Dorsolateral prefrontal cortex (tissue), 120 donors: ENCODE measurements at regions of chr11 and their contacts with region 1.

Region 1: DNA sequence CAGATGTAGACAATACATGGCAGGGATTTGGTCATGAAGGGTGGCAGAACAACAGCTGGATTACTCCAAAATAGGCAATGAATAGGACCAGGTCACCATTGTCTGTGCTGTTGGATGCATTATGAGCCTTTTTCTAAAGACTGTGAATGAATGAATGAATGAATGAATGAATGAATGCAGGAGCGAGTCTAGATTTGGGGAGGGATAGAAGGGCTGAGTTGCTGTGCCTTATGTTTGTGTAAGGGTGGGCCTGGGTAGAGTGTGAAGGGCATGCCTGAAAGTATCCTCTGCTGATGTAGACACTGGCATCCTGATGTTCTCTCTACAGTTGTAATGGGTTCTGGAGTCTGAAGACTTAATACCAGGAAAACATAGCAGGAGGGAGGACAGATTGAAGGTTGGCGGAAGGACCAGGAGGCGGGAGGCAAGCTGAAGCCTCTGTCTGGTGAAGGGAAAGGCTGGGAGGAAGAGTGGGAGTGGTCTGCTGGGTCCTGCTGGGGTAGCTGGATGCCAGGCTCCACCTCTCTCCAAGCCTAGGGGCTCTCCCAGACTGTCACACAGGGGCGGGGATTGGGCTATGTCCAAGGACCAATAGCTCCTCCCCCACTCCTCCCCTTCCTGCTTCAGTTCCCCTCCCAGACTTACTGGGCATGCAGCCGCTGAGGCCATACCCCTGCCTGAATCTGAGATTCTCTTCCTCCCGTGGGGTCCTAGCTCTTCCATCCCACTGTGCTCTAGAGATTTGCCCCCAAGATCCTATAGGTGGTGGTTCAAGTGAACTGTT is 4.8 kb downstream of the TRIM3 start:
- DNase-seq: peak; percentile 31 to 91 (median 83)
- H3K4me3 ChIP-seq: peak overlapping the region in 17 of 59 donors; percentile 7 to 35 (median 21)
- H3K27ac ChIP-seq: peak overlapping the region in 55 of 59 donors; percentile 36 to 93 (median 78)
- H3K27me3 ChIP-seq: no peaks in the 10 kb centered on the region
- CTCF ChIP-seq: peak in 4 of 56 donors; percentile 14 to 27 (median 21)

Region 2: DNA sequence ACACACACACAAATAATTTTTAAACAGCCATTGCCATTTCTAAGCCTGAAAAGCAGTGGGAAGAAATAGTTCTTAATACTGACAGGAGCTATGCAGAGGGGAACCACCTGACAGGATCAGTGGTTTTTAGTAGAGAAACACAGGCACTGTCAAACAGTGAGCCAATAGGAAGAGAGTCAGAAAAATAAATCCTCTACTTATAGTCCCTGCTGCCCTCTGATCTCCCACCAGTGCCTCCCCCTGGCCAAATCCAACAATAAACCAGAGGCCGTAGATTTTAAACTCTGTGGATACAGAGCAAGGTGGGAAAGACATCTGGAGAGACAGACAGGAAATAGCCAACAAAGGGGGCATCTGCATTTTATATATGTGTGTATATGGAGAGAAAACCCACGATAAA is 369.3 kb before region 1 on chr11:
- intact Hi-C with region 1: no loop called
- DNase-seq: no peak
- H3K4me3 ChIP-seq: no peak overlapping the region
- H3K27ac ChIP-seq: no peak overlapping the region
- H3K27me3 ChIP-seq: peaks cover 0 to 9% (median 0%) of the 10 kb centered on the region in 45 donors
- CTCF ChIP-seq: no peak

Region 3: GRCh38 chr11:6234387-6235107 is 234.4 kb before region 1 on chr11 and contains the start of gene FHIP1B:
- intact Hi-C with region 1: loop called in 1 of 2 experiments (anchors 10 kb)
- DNase-seq: peak; percentile 99 to 100 (median 100)
- H3K4me3 ChIP-seq: peak within 1 kb of the TSS; percentile 49 to 92 (median 80)
- H3K27ac ChIP-seq: peak within 1 kb of the TSS in 53 of 59 donors; percentile 0 to 88 (median 73)
- H3K27me3 ChIP-seq: no peaks in the 10 kb centered on the region
- CTCF ChIP-seq: peak in 34 of 56 donors; percentile 3 to 61 (median 28)
- total RNA-seq, gene FHIP1B: 27.8 to 55.6 (median 37.8) TPM

Region 4: DNA sequence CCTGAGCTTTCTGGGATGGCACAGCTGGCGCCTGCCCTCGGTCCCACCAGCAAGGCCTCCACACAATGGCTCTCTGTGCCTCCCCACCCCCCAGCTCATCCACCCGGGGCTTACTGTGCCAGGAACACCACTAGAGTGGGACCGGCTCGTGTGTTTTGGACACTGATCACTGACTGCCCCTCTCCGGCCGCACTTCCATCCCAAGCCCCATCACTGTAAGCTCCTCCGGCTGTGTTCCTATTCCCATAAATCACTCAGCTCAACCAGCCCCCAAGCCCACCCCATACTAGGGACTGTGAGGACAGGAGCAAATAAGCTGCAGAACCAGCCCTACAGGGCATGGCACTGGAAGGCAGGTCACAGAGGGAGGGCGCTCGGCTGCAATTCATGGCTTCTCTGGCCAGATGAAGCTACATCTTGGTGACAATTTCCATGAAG is 57.3 kb before region 1 on chr11:
- intact Hi-C with region 1: loop called in 1 of 2 experiments (anchors 2 kb)
- DNase-seq: peak in 9 of 10 donors; percentile 78 to 93 (median 88)
- H3K4me3 ChIP-seq: peak overlapping the region in 38 of 59 donors; percentile 0 to 91 (median 30)
- H3K27ac ChIP-seq: peak overlapping the region; percentile 85 to 100 (median 97)
- H3K27me3 ChIP-seq: no peaks in the 10 kb centered on the region
- CTCF ChIP-seq: peak in 30 of 56 donors; percentile 9 to 60 (median 34)